Activated CD4-positive, alpha-beta memory T cell treated with anti-CD3 and anti-CD28 coated beads, Interleukin-2, amount 10 ng/mL, durations not matched to agents 7 days and 5 days (primary cell): ENCODE measurements at regions of chr12 and their contacts with region 1.

Region 1: DNA sequence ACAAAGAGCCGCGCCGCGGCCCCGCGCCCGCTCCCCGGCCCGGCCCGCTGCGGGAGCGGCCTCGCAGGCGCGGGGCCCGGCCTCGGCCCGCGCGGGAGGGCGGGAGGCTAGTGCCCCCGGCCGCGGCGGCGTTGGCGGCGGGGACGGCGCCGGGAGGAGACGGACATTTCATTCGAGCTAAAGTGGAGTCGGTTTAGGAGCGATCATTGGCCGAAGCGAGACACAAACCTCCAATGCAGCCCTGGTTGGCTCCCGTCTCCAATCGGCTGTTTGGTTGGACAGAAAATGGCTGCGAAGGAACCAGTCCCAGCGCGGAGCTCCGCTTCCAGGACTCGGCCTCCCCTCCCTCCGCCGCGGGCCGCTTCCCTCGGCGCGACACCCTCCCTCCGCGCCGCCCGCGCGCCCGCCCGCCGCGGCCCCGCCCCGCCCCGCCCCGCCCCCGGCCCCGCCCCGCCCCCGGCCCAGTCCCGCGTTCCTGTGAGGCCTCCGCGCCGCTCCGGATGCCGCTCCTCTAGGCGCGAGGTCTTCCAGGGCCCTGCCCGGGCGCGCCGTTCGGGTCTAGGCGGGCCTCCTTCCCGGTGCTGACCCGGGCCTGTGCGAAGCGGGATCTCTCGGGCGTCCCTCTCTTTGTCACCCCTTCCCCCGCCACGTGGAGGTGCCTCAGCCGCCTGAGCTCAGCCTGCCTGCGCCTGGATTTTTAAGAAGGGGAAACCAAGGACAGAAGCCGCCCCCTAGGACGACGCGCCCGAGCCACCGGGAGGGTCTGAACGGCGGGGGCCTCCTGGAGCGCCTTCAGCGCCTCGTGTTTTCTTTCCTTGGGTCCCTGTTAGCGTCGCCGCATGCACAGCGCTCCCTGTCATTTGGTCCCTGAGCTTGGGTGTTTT is at the start of gene NFYB:
- DNase-seq: peak; percentile 94
- H3K4me3 Mint-ChIP-seq: peak within 1 kb of the TSS; percentile 88
- H3K27ac Mint-ChIP-seq: peak within 1 kb of the TSS; percentile 86
- H3K4me1 Mint-ChIP-seq: peaks cover 23% of the 10 kb centered on the region
- H3K27me3 Mint-ChIP-seq: peaks cover 18% of the 10 kb centered on the region
- total RNA-seq, gene NFYB: 22.3 to 22.7 TPM

Region 2: DNA sequence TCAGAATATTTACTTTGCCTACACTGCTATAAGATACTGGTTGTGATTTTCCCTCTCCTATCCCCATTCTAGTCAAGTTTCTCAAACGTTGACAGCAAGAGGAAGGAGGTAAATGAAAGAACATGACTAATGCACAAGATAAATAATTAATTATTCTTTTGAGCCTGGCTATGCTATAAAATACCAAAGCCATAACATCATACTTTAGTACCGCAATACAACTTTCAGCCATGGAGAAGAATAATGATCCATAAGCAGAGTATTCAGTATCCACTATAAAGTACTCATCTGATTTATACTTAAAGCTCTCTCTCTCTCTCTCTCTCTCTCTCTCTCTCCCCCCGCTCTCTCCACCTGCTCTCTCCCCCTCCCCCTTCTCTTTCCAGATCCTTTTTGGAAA is 131.2 kb before region 1 on chr12:
- CTCF ChIA-PET with region 1: no interaction called
- POLR2A ChIA-PET with region 1: no interaction called
- DNase-seq: no peak
- H3K4me3 Mint-ChIP-seq: no peak overlapping the region
- H3K27ac Mint-ChIP-seq: no peak overlapping the region
- H3K4me1 Mint-ChIP-seq: no peaks in the 10 kb centered on the region
- H3K27me3 Mint-ChIP-seq: peaks cover 36% of the 10 kb centered on the region

Region 3: GRCh38 chr12:104064031-104064822 is 73.9 kb before region 1 on chr12 and contains the start of gene HCFC2:
- CTCF ChIA-PET with region 1: no interaction called
- POLR2A ChIA-PET with region 1: interaction called, 24 read pairs
- DNase-seq: peak; percentile 92
- H3K4me3 Mint-ChIP-seq: peak within 1 kb of the TSS; percentile 95
- H3K27ac Mint-ChIP-seq: peak within 1 kb of the TSS; percentile 76
- H3K4me1 Mint-ChIP-seq: peaks cover 25% of the 10 kb centered on the region
- H3K27me3 Mint-ChIP-seq: peaks cover 14% of the 10 kb centered on the region
- total RNA-seq, gene HCFC2: 15.8 to 17.7 TPM

Region 4: GRCh38 chr12:104154286-104154685 is 16.1 kb after region 1 on chr12:
- CTCF ChIA-PET with region 1: no interaction called
- POLR2A ChIA-PET with region 1: interaction called, 11 read pairs
- DNase-seq: peak; percentile 26
- H3K4me3 Mint-ChIP-seq: no peak overlapping the region
- H3K27ac Mint-ChIP-seq: peak overlapping the region; percentile 76
- H3K4me1 Mint-ChIP-seq: peaks cover 16% of the 10 kb centered on the region
- H3K27me3 Mint-ChIP-seq: peaks cover 14% of the 10 kb centered on the region

Region 5: GRCh38 chr12:104303538-104304151 is 165.5 kb after region 1 on chr12 and contains the start of gene EID3:
- CTCF ChIA-PET with region 1: no interaction called
- POLR2A ChIA-PET with region 1: interaction called, 15 read pairs
- DNase-seq: peak; percentile 92
- H3K4me3 Mint-ChIP-seq: peak within 1 kb of the TSS; percentile 83
- H3K27ac Mint-ChIP-seq: peak within 1 kb of the TSS; percentile 94
- H3K4me1 Mint-ChIP-seq: peaks cover 71% of the 10 kb centered on the region
- H3K27me3 Mint-ChIP-seq: no peaks in the 10 kb centered on the region
- total RNA-seq, gene EID3: 3.4 to 4.2 TPM